AG04449 (cell line): ENCODE measurements at regions of chr1 and their contacts with region 1.

Region 1: GRCh38 chr1:146007506-146008133 is 11.2 kb upstream of the TXNIP start:
- DNase-seq: no peak
- H3K4me3 ChIP-seq: no peak overlapping the region
- CTCF ChIP-seq: no peak

Region 2: GRCh38 chr1:146019231-146020057 is 11.8 kb after region 1 on chr1:
- CTCF ChIA-PET with region 1: interaction called, 45 read pairs
- POLR2A ChIA-PET with region 1: no interaction called
- DNase-seq: no peak
- H3K4me3 ChIP-seq: no peak overlapping the region
- CTCF ChIP-seq: no peak